ENCODE measurements at regions of chr5 and their contacts with region 1.

Region 1: GRCh38 chr5:134577796-134578363 is 52.4 kb downstream of the JADE2 start:
- DNase-seq: peak; percentile 84
- H3K4me3 Mint-ChIP-seq: no peak overlapping the region
- H3K27ac Mint-ChIP-seq: no peak overlapping the region
- H3K4me1 Mint-ChIP-seq: no peaks in the 10 kb centered on the region
- H3K27me3 Mint-ChIP-seq: no peaks in the 10 kb centered on the region

Region 2: DNA sequence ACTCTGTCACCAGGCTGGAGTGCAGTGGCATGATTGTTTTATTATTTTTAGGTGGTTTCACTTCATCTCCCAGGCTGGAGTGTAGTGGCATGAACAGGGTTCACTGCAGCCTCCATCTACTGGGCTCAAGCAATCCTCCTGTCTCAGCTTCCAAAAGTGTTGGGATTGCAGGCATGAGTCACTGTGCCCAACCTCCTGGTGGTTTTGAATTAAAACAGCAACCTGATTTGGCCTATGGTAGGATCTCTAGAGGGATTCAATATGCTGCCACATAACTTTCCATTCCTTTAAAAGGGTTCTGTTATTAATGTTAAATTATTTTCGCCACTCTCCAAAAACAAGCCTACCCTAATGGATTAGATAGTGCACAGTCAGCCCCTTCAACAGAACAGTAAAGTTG is 1536.0 kb before region 1 on chr5:
- CTCF ChIA-PET with region 1: no interaction called
- DNase-seq: no peak
- H3K4me3 Mint-ChIP-seq: no peak overlapping the region
- H3K27ac Mint-ChIP-seq: no peak overlapping the region
- H3K4me1 Mint-ChIP-seq: no peaks in the 10 kb centered on the region
- H3K27me3 Mint-ChIP-seq: peaks cover 11% of the 10 kb centered on the region

Region 3: GRCh38 chr5:134304311-134304710 is 273.6 kb before region 1 on chr5:
- CTCF ChIA-PET with region 1: interaction called, 10 read pairs
- DNase-seq: no peak
- H3K4me3 Mint-ChIP-seq: no peak overlapping the region
- H3K27ac Mint-ChIP-seq: no peak overlapping the region
- H3K4me1 Mint-ChIP-seq: peaks cover 8% of the 10 kb centered on the region
- H3K27me3 Mint-ChIP-seq: no peaks in the 10 kb centered on the region